ENCODE measurements at regions of chr1 and their contacts with region 1.

Region 1: GRCh38 chr1:157380523-157380922 is 171.8 kb downstream of the FCRL5 start:
- DNase-seq: no peak
- H3K4me3 ChIP-seq: no peak overlapping the region
- H3K27ac ChIP-seq: no peak overlapping the region
- H3K4me1 ChIP-seq: no peaks in the 10 kb centered on the region
- H3K27me3 ChIP-seq: peaks cover 47% of the 10 kb centered on the region; the same call in 1 of the 2 replicates
- CTCF ChIP-seq: no peak
- EP300 ChIP-seq: no peak
- RAD21 ChIP-seq: no peak

Region 2: DNA sequence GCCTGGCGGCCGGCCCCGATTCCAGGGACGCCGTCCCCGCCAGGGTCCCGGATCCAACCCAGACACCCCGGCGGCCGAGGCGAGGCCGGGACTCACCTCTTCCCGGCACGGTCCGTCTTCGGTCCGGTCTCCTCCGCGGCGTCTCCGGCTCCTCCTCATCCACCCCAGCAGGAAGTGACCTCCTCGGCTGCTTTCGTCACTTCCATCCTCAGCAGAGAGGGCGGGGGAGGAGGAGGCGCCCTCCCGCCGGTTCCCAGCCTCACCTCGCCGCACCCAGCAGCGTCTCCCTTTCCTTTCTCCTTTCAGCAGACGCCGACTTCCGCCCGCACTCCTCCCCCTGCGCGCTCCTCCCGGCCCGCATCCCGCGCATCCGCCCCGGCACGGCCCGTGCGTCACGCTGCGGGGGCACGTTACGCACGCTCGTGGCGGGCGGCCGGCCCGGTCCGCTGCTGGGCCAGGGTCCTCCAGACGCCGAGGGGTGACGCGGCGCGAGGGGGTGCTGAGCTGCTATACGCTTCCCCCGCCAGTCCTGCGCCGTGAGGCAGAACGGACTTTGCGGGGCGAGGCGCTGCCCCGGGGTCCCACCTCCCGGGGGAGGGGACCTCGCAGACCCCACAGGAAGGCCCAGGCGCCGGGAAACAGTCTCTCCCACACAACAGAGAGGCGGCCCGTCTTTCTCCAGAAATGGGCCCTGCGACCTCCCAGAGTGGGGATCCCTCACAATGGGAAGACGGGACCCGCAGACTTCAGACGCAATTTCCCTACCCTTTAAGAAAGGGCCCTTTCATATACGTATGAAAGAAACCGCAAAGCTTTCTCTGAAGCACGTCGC is 242.1 kb before region 1 on chr1 and contains the start of gene ETV3:
- CTCF ChIA-PET with region 1: no interaction called
- POLR2A ChIA-PET with region 1: no interaction called
- DNase-seq: peak; percentile 95
- H3K4me3 ChIP-seq: peak within 1 kb of the TSS; percentile 89 to 91
- H3K27ac ChIP-seq: peak within 1 kb of the TSS; percentile 73 to 96
- H3K4me1 ChIP-seq: peaks cover 13 to 33% of the 10 kb centered on the region in 2 experiments; a peak in 3 of 4 replicates
- H3K27me3 ChIP-seq: no peaks in the 10 kb centered on the region
- CTCF ChIP-seq: no peak
- EP300 ChIP-seq: no peak
- RAD21 ChIP-seq: no peak
- polyA plus RNA-seq, gene ETV3: 5.4 and 8.5 TPM in 2 replicates

Region 3: GRCh38 chr1:157399984-157400382 is 19.5 kb after region 1 on chr1:
- CTCF ChIA-PET with region 1: no interaction called
- POLR2A ChIA-PET with region 1: no interaction called
- DNase-seq: no peak
- H3K4me3 ChIP-seq: no peak overlapping the region
- H3K27ac ChIP-seq: no peak overlapping the region
- H3K4me1 ChIP-seq: no peaks in the 10 kb centered on the region
- H3K27me3 ChIP-seq: peaks cover 10% of the 10 kb centered on the region; the same call in 1 of the 2 replicates
- CTCF ChIP-seq: no peak
- EP300 ChIP-seq: no peak
- RAD21 ChIP-seq: no peak

Region 4: DNA sequence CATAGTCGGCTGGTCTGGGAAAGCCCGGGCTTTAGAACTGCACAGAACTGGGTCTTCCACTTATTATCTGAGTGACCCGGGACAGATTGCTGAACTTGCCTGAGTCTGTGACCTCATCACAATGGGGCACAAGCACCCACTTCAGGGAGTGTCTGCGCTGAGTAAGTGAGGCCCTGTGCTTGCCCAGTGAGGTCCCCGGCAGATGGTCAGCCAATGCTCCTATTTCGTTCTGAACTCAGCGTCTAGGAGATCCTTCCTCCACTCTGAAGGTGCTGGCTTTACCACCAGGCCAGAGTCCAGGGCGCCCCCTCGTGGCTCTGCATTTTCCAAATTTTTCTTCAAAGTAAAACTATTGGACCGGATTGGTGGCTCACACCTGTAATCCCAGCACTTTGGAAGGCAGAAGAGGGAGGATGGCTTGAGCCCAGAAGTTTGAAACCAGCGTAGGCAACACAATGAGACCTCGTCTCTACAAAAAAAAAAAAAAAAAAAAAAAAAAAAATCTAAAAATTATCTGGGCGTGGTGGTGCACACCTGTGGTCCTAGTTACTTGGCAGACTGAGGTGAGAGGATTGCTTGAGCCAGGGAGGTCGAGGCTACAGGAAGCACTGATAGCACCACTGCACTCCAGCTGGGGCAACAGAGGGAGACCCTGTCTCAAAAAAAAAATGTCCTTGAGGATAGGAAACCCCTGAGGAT is 110.1 kb after region 1 on chr1:
- CTCF ChIA-PET with region 1: interaction called, 13 read pairs
- POLR2A ChIA-PET with region 1: no interaction called
- DNase-seq: peak; percentile 25
- H3K4me3 ChIP-seq: no peak overlapping the region; a peak in 1 of 4 replicates
- H3K27ac ChIP-seq: no peak overlapping the region
- H3K4me1 ChIP-seq: no peaks in the 10 kb centered on the region
- H3K27me3 ChIP-seq: 0 out of 2 replicates have a peak, but pooled peaks cover 25% of the 10 kb centered on the region
- CTCF ChIP-seq: peak; percentile 69
- EP300 ChIP-seq: no peak
- RAD21 ChIP-seq: peak; percentile 53